ENCODE measurements at regions of chr14 and their contacts with region 1.

Region 1: DNA sequence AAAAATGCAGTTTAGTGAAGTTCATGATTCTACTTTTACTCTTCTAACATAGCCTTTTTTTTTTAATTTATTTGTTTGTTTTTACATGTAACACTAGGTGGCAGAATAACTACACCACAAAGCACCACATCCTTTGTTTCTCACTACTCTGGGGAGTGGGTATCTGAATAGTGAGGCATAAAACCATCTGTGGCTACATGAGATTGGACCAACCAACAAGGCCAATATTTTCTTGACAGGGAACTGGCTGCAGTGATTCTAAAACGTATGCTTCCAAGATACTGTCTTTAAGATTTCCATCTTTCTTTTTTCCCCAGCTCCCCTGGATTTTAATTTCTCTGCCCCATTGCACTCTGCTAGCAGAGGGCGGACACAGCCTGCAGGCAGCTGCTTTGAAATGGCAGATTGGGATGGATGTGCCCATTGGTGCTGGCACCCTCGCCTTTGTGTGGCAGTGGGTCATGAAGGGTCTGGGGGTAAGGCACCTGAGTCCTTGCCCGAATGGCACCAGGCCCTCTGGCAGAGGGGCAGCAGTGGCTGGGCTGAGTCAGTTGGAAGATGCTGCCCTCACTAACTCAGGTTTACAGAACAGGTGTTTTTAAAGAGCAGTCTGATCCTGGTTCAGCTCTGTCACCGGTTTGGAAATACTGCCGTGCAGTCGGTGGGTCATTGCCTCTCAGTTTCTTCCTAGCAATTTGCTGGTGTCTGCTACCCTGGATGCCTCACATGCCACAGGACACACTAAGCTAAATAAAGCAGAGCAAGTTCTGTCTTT is 429.1 kb downstream of the RAD51B start:
- DNase-seq: no peak
- H3K4me3 Mint-ChIP-seq: no peak overlapping the region
- H3K27ac Mint-ChIP-seq: no peak overlapping the region
- H3K4me1 Mint-ChIP-seq: peaks cover 41% of the 10 kb centered on the region
- H3K27me3 Mint-ChIP-seq: no peaks in the 10 kb centered on the region

Region 2: GRCh38 chr14:67934008-67934481 is 314.6 kb before region 1 on chr14:
- CTCF ChIA-PET with region 1: interaction called, 3 read pairs
- intact Hi-C with region 1: loop called (anchors 2 kb)
- DNase-seq: peak; percentile 12
- H3K4me3 Mint-ChIP-seq: no peak overlapping the region
- H3K27ac Mint-ChIP-seq: no peak overlapping the region
- H3K4me1 Mint-ChIP-seq: peaks cover 4% of the 10 kb centered on the region
- H3K27me3 Mint-ChIP-seq: no peaks in the 10 kb centered on the region

Region 3: GRCh38 chr14:68232300-68233055 is 16.2 kb before region 1 on chr14:
- CTCF ChIA-PET with region 1: interaction called, 3 read pairs
- intact Hi-C with region 1: loop called (anchors 2 kb)
- DNase-seq: peak; percentile 73
- H3K4me3 Mint-ChIP-seq: no peak overlapping the region
- H3K27ac Mint-ChIP-seq: no peak overlapping the region
- H3K4me1 Mint-ChIP-seq: peaks cover 18% of the 10 kb centered on the region
- H3K27me3 Mint-ChIP-seq: no peaks in the 10 kb centered on the region

Region 4: DNA sequence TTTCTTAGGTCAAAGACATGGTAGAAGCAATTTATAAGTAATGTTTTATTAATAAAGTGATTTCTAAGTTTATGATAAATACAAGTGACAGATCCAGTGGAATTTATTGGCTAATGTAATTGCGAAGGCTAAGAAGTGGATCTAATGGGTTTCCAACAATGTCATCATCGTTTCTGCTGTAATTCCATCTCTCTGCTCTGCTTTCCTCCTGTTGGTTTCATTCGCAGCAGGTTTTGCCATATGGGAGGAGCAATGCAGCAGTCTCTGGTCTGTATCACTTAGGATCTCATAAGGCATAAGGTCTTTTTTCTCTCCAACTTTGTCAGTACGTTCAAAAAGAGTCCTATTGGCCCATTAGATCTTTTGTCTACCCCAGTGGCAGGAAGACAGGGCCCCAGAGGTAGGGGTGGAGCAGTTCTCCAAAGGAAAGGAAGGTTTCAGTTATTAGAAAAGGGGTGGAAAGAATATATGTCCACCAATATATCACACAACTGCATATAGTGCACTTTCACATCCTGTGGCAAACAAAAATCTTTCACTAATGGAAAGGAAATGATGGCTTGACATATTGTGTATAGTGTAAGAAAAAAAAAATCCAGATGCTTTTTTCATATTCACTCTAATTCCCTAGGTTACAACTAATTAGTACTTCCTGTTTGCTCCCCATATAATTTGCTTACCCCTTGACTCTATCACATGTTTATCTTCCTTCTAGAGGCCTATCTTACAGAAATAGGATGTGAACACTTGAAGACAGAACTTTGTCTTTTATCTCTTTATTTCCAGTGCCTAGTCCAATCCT is 92.9 kb after region 1 on chr14:
- CTCF ChIA-PET with region 1: no interaction called
- intact Hi-C with region 1: no loop called
- DNase-seq: no peak
- H3K4me3 Mint-ChIP-seq: no peak overlapping the region
- H3K27ac Mint-ChIP-seq: no peak overlapping the region
- H3K4me1 Mint-ChIP-seq: peaks cover 13% of the 10 kb centered on the region
- H3K27me3 Mint-ChIP-seq: no peaks in the 10 kb centered on the region

Region 5: GRCh38 chr14:68359837-68360552 is 111.3 kb after region 1 on chr14:
- CTCF ChIA-PET with region 1: no interaction called
- intact Hi-C with region 1: loop called (anchors 5 kb)
- DNase-seq: peak; percentile 43
- H3K4me3 Mint-ChIP-seq: no peak overlapping the region
- H3K27ac Mint-ChIP-seq: peak overlapping the region; percentile 32
- H3K4me1 Mint-ChIP-seq: peaks cover 40% of the 10 kb centered on the region
- H3K27me3 Mint-ChIP-seq: no peaks in the 10 kb centered on the region

Region 6: GRCh38 chr14:68482772-68483395 is 234.2 kb after region 1 on chr14:
- CTCF ChIA-PET with region 1: no interaction called
- intact Hi-C with region 1: loop called (anchors 5 kb)
- DNase-seq: peak; percentile 19
- H3K4me3 Mint-ChIP-seq: no peak overlapping the region
- H3K27ac Mint-ChIP-seq: peak overlapping the region; percentile 37
- H3K4me1 Mint-ChIP-seq: peaks cover 54% of the 10 kb centered on the region
- H3K27me3 Mint-ChIP-seq: no peaks in the 10 kb centered on the region

Region 7: DNA sequence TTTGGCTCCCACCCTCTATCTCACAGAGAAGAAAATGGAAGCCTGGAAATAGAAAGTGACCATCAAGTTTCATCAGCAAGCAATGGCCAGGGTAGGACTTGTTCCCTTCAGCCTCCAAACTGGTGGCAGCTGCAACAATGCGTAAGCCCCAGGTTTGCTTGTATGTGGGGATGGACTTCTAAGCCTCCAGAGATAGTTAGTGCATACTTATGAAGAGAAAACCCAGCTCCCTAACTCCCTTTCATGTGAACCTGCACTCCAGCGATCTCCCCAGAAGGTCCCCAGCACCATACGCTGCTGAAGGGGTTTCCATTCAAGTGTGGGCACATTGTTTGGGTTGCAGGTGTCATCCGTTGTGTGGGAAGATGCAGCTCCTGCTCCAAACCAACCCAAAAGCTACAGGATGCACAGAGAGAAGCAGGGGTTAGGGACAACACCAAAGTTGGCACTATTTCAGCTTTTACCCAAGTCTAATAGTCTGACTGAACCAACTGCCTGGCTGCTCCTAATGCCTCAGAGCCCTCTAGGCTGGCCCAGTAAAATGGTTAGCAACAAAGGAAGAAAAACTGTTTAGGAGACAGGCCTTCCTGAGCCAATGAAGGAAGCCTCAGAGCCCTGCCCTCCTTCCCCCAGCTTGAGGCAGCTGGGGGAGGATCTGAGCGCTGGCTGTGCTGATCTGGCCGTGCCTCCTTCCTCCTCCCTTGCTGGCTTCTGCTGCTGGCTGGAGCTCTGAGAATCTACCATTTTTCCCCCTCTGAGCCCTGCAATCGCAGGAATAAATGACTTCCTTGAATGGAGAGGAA is 531.9 kb after region 1 on chr14:
- CTCF ChIA-PET with region 1: interaction called, 12 read pairs
- intact Hi-C with region 1: no loop called
- DNase-seq: peak; percentile 48
- H3K4me3 Mint-ChIP-seq: peak overlapping the region; percentile 61
- H3K27ac Mint-ChIP-seq: peak overlapping the region; percentile 62
- H3K4me1 Mint-ChIP-seq: peaks cover 72% of the 10 kb centered on the region
- H3K27me3 Mint-ChIP-seq: no peaks in the 10 kb centered on the region

Region 8: DNA sequence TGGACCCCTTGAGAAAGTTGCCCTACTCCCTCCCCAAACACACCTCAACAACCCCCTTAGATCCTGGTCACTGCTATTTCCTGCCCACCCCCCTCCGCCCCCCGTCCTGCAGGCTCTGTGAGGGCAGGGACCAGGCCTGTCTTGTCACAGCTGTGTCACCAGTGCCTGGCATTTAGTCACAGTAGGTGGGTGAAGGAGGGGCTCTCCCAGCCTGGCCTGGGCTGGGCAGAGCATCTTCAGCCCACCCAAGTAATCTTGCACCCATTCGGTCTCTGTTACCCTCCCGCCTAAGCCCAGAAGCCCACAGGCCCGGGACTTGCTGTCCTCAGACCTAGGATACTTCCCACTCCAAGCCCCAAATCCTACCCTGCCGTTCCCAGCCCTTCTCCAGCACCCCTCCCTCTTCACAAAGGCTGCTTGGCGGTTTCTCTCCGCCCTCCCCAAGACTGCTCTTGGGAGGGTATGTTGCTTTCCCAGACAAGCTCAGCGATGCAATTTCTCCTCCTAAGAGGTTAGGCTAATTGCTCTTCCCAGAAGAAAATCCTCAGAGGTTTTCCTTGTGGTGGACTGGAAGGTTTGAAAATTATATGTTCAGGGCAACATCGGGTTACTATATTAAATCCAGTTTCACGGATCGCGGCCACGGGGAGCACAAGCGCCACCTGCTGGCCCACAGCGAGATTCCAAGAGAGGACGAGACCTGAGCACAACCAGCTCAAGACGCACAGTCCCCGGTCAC is 595.0 kb after region 1 on chr14:
- CTCF ChIA-PET with region 1: interaction called, 14 read pairs
- intact Hi-C with region 1: loop called (anchors 1 kb)
- DNase-seq: peak; percentile 86
- H3K4me3 Mint-ChIP-seq: no peak overlapping the region
- H3K27ac Mint-ChIP-seq: no peak overlapping the region
- H3K4me1 Mint-ChIP-seq: peaks cover 23% of the 10 kb centered on the region
- H3K27me3 Mint-ChIP-seq: no peaks in the 10 kb centered on the region

Measured in activated naive CD4-positive, alpha-beta T cell treated with anti-CD3 and anti-CD28 coated beads for 36 hours (primary cell).